CD4-positive, alpha-beta T cell (primary cell): ENCODE measurements at regions of chr11 and their contacts with region 1.

Region 1: DNA sequence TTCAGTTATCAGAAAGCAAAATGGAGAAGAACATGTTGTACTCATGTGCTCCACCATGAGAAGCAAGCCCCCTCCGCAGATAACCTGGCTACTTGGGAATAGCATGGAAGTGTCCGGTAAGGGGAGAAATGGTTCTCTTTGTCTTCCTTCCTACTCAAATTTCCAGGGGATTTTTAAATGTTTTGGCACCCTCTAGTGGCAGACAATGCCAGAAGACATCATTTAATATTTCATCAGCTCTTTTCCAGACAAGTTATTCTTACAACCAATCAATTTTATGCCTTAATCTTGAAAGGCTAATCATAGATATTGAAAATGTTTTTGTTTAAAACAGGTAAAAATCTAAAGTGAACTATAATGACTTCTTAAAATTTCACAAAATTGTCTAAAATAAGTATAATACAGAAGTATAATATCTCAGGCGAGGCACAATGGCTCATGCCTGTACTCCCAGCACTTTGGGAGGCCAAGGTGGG is 15.7 kb downstream of the CRTAM start:
- DNase-seq: peak in 10 of 14 experiments; percentile 5 to 81 (median 34)
- ATAC-seq: no peak
- H3K4me3 ChIP-seq: no peak overlapping the region
- H3K4me3 Mint-ChIP-seq: no peak overlapping the region
- H3K27ac ChIP-seq: no peak overlapping the region
- H3K27ac Mint-ChIP-seq: peak overlapping the region; percentile 21
- H3K4me1 ChIP-seq: peaks cover 24% of the 10 kb centered on the region
- H3K4me1 Mint-ChIP-seq: peaks cover 33% of the 10 kb centered on the region
- H3K27me3 ChIP-seq: no peaks in the 10 kb centered on the region
- H3K27me3 Mint-ChIP-seq: no peaks in the 10 kb centered on the region
- CTCF ChIP-seq: peak; percentile 82

Region 2: DNA sequence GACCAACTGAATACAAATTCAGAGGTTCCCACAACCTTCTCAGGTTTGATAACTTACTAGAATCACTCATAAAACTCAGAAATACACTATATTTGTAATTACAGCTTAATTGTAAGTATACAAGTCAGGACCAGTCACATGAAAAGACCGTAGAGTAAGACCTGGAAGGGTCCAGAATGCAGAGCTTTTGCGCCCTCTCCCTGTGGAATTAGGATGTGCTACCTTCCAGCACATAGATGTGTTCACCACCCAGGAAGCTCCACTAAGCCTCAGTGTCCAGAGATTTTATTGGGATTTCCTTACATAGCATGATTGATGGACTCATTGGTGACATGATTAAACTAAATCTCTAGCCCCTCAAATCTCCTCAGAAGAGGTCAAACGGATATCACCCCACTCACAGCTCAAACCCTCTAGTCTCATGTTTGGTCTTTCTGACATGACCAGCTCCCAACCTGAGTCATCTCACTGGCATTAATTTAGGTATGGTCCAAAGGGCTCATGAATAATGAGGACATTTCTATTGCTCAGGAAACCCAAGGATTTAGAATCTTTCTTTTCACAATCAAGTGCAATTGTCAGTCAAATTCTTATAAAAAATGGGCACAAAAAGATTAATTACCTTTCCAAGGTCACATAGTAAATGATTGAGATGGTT is 275.7 kb before region 1 on chr11:
- CTCF ChIA-PET with region 1: interaction called, 9 read pairs
- POLR2A ChIA-PET with region 1: interaction called, 3 read pairs
- intact Hi-C with region 1: loop called (anchors 1 to 5 kb)
- DNase-seq: no peak
- ATAC-seq: no peak
- H3K4me3 ChIP-seq: no peak overlapping the region
- H3K4me3 Mint-ChIP-seq: no peak overlapping the region
- H3K27ac ChIP-seq: no peak overlapping the region
- H3K27ac Mint-ChIP-seq: no peak overlapping the region
- H3K4me1 ChIP-seq: peaks cover 8% of the 10 kb centered on the region
- H3K4me1 Mint-ChIP-seq: peaks cover 7% of the 10 kb centered on the region
- H3K27me3 ChIP-seq: no peaks in the 10 kb centered on the region
- H3K27me3 Mint-ChIP-seq: peaks cover 8% of the 10 kb centered on the region
- CTCF ChIP-seq: no peak

Region 3: GRCh38 chr11:122628810-122629555 is 225.0 kb before region 1 on chr11:
- CTCF ChIA-PET with region 1: interaction called, 15 read pairs
- POLR2A ChIA-PET with region 1: no interaction called
- intact Hi-C with region 1: loop called (anchors 1 to 5 kb)
- DNase-seq: peak; percentile 40 to 81 (median 64)
- ATAC-seq: peak; percentile 80
- H3K4me3 ChIP-seq: no peak overlapping the region
- H3K4me3 Mint-ChIP-seq: no peak overlapping the region
- H3K27ac ChIP-seq: no peak overlapping the region
- H3K27ac Mint-ChIP-seq: no peak overlapping the region
- H3K4me1 ChIP-seq: no peaks in the 10 kb centered on the region
- H3K4me1 Mint-ChIP-seq: peaks cover 14% of the 10 kb centered on the region
- H3K27me3 ChIP-seq: no peaks in the 10 kb centered on the region
- H3K27me3 Mint-ChIP-seq: no peaks in the 10 kb centered on the region
- CTCF ChIP-seq: peak; percentile 65

Region 4: DNA sequence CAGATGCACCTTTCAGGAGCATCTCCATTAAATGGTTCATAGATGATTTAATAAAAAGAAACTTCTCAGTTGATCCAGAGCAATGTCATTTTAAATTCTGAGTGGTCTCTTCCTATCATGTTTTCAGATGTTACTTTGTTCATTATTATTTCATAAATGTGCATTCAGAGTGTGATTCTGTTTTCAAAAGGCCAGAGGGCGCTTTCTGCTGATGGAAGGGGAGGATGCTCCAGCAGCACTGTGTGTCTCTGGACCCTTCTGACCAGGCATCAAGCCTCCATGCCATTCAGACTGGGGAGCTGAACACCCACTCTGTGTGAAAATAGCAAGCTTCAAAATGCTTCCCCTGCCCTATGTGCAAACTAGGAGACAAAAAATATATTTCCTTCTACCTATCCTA is 39.6 kb before region 1 on chr11:
- CTCF ChIA-PET with region 1: interaction called, 3 read pairs
- POLR2A ChIA-PET with region 1: interaction called, 4 read pairs
- intact Hi-C with region 1: loop called (anchors 1 to 5 kb)
- DNase-seq: peak in 2 of 14 experiments; percentile 13 to 24
- ATAC-seq: no peak
- H3K4me3 ChIP-seq: no peak overlapping the region
- H3K4me3 Mint-ChIP-seq: no peak overlapping the region
- H3K27ac ChIP-seq: no peak overlapping the region
- H3K27ac Mint-ChIP-seq: no peak overlapping the region
- H3K4me1 ChIP-seq: no peaks in the 10 kb centered on the region
- H3K4me1 Mint-ChIP-seq: peaks cover 25% of the 10 kb centered on the region
- H3K27me3 ChIP-seq: no peaks in the 10 kb centered on the region
- H3K27me3 Mint-ChIP-seq: no peaks in the 10 kb centered on the region
- CTCF ChIP-seq: no peak

Region 5: DNA sequence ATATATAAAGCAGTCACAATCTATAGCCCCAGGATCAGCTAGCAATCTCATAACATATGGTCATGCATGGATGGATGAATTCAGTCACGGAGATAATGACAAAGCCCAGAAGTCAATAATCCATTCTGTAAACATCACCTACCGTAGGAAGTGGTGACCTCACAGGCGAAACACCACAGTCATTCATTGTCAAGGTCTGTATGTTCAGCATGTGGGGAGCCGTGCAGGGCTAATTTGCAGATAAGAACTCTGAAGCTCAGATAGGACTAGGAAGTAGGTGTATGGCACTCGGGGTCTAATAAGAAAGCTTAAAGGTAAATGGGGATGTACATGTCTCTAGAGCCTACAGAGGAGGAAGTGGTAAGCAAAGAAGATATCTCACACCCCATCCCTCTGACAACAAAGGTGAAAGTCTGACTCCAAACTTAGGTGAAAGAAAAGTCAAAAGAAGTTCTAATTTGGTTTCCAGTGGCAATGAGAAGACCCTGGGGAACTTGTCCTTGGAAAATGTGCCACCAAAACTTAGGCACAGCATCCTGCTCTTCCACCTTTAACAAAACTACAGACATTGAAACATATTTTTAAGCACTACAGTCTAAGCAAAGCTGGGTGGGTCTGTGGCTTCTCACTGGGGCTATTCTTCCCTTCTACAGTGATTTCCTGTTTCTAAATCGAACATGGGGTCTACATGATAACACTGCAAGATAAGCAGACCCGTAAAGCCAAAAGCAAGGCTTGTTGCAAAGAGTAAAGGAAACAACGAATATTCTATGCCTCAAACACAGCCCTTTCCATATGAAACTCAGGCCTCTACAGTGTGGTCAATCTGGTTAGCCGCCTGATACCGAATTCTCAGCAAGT is 10.5 kb before region 1 on chr11:
- CTCF ChIA-PET with region 1: interaction called, 14 read pairs
- POLR2A ChIA-PET with region 1: interaction called, 44 read pairs
- intact Hi-C with region 1: loop called in 1 of 2 experiments (anchors 2 kb)
- DNase-seq: peak in 8 of 14 experiments; percentile 13 to 83 (median 33)
- ATAC-seq: peak; percentile 91
- H3K4me3 ChIP-seq: peak overlapping the region; percentile 29
- H3K4me3 Mint-ChIP-seq: peak overlapping the region; percentile 43
- H3K27ac ChIP-seq: peak overlapping the region; percentile 60 to 74
- H3K27ac Mint-ChIP-seq: peak overlapping the region; percentile 81
- H3K4me1 ChIP-seq: peaks cover 20% of the 10 kb centered on the region
- H3K4me1 Mint-ChIP-seq: peaks cover 46% of the 10 kb centered on the region
- H3K27me3 ChIP-seq: no peaks in the 10 kb centered on the region
- H3K27me3 Mint-ChIP-seq: no peaks in the 10 kb centered on the region
- CTCF ChIP-seq: no peak

Region 6: DNA sequence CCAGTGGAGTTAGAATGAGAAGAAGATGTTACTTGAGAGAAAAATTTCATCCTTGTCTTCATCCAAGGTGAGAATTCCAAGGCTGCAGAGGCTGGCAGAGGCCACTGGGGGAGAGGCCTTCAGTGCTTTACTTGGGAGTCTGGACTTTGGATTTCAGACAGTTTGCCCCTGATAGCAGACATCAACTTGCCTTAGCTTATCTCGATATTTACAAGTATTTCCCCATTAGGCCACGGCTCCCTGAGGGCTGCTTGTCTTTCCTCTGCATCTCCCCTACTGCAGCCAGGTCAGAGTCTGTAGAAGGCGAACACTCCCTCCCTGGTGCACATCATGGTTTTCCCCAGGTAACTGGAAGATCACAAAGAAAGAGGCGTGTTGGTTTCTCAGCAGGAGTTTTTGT is 157.5 kb after region 1 on chr11:
- CTCF ChIA-PET with region 1: no interaction called
- POLR2A ChIA-PET with region 1: no interaction called
- intact Hi-C with region 1: no loop called
- DNase-seq: no peak
- ATAC-seq: no peak
- H3K4me3 ChIP-seq: no peak overlapping the region
- H3K4me3 Mint-ChIP-seq: no peak overlapping the region
- H3K27ac ChIP-seq: no peak overlapping the region
- H3K27ac Mint-ChIP-seq: no peak overlapping the region
- H3K4me1 ChIP-seq: no peaks in the 10 kb centered on the region
- H3K4me1 Mint-ChIP-seq: no peaks in the 10 kb centered on the region
- H3K27me3 ChIP-seq: no peaks in the 10 kb centered on the region
- H3K27me3 Mint-ChIP-seq: peaks cover 22% of the 10 kb centered on the region
- CTCF ChIP-seq: no peak

Region 7: DNA sequence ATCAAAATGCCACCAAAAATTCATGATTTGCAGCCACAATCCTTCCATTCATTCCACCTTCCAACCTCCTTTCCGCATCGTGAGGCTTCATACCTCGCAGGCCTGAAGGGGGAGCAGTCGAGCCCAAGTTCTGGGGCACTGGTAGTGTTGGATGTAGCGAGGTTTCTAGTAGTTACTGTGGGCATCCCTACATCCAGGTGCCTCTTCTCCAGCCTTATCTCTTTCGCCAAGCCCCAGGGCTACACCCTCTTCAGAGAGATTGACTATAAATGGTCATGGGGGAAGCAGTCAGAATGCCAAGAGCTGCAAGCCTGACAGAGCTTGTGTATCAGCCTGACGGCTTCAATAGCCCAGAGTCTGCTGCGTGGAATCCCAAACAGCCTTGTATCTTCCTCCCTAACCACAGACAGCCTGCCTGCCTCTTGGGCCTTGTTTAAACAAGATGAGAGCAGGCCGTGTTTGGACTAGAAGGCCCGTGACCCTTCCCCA is 312.1 kb after region 1 on chr11:
- CTCF ChIA-PET with region 1: no interaction called
- POLR2A ChIA-PET with region 1: no interaction called
- intact Hi-C with region 1: no loop called
- DNase-seq: no peak
- ATAC-seq: no peak
- H3K4me3 ChIP-seq: no peak overlapping the region
- H3K4me3 Mint-ChIP-seq: no peak overlapping the region
- H3K27ac ChIP-seq: no peak overlapping the region
- H3K27ac Mint-ChIP-seq: no peak overlapping the region
- H3K4me1 ChIP-seq: no peaks in the 10 kb centered on the region
- H3K4me1 Mint-ChIP-seq: no peaks in the 10 kb centered on the region
- H3K27me3 ChIP-seq: no peaks in the 10 kb centered on the region
- H3K27me3 Mint-ChIP-seq: no peaks in the 10 kb centered on the region
- CTCF ChIP-seq: no peak